A549 (cell line): ENCODE measurements at regions of chr7 and their contacts with region 1.

Region 1: DNA sequence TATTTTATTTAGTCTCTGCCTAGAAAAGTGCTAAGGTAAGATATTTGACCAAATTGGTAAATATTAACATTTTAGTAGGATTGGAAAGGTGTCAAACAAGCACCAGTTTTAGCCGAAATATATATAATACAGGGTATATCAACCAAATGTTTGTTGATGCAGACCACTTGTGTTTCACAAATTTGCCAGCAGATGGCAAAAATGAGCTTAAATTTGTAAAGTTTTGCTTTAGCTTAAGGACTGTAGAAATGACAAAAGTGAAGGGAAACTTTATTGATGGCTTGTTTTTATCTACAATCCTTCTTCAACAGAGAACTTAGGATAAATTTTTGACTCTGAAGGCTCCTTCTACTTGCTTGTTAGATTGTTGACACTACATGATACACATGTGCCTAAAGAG is 4.8 kb upstream of the POLR1F start:
- DNase-seq: peak in 1 of 2 experiments; percentile 54
- ATAC-seq: peak in 1 of 2 experiments; percentile 50; a peak in 2 of 6 replicates
- H3K4me3 ChIP-seq: no peak overlapping the region
- H3K27ac ChIP-seq: no peak overlapping the region
- H3K4me1 ChIP-seq: 0 out of 3 replicates have a peak, but pooled peaks cover 5% of the 10 kb centered on the region
- CTCF ChIP-seq: peak; percentile 79
- EP300 ChIP-seq: no peak
- POLR2A ChIP-seq: no peak
- RAD21 ChIP-seq: peak; percentile 69 to 81

Region 2: DNA sequence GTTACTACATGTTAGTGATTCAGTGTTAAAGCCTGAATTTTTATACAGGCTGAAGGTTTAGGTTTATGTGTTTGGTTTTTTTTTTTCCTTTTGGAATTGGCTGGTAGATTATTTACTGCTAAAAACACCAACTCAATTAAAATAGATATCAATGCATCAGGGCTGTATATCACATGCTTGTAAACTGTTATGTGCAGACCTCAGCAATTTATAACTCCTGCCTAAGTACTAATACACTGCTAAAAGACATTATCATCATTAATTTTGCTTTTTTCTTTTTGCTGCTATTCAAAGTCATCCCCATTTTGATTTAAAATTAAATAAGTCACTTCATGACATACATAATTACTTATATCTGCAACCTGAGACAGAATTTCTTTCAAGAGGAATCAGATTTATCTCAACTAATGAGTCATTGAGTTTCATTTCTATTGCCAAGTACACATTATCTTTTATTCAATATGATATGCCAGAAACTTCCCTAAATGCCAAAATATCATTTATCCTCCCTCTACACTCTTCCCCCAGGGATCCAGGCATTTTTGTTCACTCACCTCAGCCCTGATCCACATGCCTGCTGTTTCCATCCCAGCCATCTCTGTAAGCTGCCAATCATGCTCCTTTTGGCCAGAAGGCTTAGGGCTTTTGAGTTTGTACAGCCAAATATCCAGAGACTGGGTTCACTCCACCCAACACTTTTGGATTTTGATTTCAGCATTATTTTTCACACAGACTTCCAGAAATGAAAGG is 103.3 kb before region 1 on chr7:
- CTCF ChIA-PET with region 1: no interaction called
- POLR2A ChIA-PET with region 1: no interaction called
- DNase-seq: no peak
- ATAC-seq: no peak
- H3K4me3 ChIP-seq: no peak overlapping the region
- H3K27ac ChIP-seq: no peak overlapping the region
- H3K4me1 ChIP-seq: no peaks in the 10 kb centered on the region
- CTCF ChIP-seq: no peak
- EP300 ChIP-seq: no peak
- POLR2A ChIP-seq: no peak
- RAD21 ChIP-seq: no peak

Region 3: GRCh38 chr7:19728716-19729115 is 15.0 kb after region 1 on chr7:
- CTCF ChIA-PET with region 1: interaction called, 12 read pairs
- POLR2A ChIA-PET with region 1: interaction called, 3 read pairs
- DNase-seq: no peak
- ATAC-seq: no peak
- H3K4me3 ChIP-seq: no peak overlapping the region
- H3K27ac ChIP-seq: no peak overlapping the region
- H3K4me1 ChIP-seq: no peaks in the 10 kb centered on the region
- CTCF ChIP-seq: no peak
- EP300 ChIP-seq: no peak
- POLR2A ChIP-seq: no peak
- RAD21 ChIP-seq: no peak

Region 4: DNA sequence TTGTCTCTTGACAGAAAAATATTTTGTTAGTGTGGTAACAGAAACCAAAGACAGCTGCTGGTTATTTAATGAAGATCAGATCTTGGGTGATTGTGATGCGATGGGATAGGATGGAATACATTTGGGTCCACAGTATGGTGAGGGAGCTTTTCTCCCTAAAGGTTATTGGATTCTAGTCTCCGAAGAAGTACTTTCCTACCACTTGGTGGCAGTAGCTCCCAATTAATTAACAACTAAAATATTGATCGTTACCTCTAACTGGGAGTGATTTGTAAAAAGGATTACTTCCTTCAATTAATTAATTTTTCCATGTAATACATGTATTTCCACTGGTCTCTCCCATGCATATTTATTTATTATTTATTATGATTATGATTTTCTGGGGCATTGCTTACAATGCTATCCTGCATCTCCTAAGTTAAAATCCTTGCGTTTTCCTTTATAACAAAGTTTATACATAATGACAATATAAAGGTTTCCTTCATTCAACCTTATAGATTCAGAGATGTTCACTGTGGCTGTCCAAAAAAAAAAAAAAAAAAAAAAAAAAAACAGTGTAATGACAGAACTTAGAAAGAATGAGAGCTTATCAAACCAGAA is 34.2 kb after region 1 on chr7:
- CTCF ChIA-PET with region 1: interaction called, 14 read pairs
- POLR2A ChIA-PET with region 1: no interaction called
- DNase-seq: peak; percentile 33 to 53
- ATAC-seq: peak; percentile 59 to 82; a peak in 5 of 6 replicates
- H3K4me3 ChIP-seq: no peak overlapping the region
- H3K27ac ChIP-seq: no peak overlapping the region
- H3K4me1 ChIP-seq: no peaks in the 10 kb centered on the region
- CTCF ChIP-seq: peak; percentile 85
- EP300 ChIP-seq: no peak
- POLR2A ChIP-seq: no peak
- RAD21 ChIP-seq: peak; percentile 87 to 94

Region 5: GRCh38 chr7:20172736-20173334 is 459.2 kb after region 1 on chr7:
- CTCF ChIA-PET with region 1: interaction called, 28 read pairs
- POLR2A ChIA-PET with region 1: no interaction called
- DNase-seq: peak; percentile 61 to 76
- ATAC-seq: peak; percentile 93 to 99
- H3K4me3 ChIP-seq: no peak overlapping the region
- H3K27ac ChIP-seq: peak overlapping the region in 1 of 2 experiments; percentile 57; a peak in 1 of 6 replicates
- H3K4me1 ChIP-seq: no peaks in the 10 kb centered on the region
- CTCF ChIP-seq: peak; percentile 81
- EP300 ChIP-seq: no peak
- POLR2A ChIP-seq: no peak
- RAD21 ChIP-seq: peak; percentile 94 to 96

Region 6: GRCh38 chr7:20310963-20311742 is 597.5 kb after region 1 on chr7:
- CTCF ChIA-PET with region 1: interaction called, 28 read pairs
- POLR2A ChIA-PET with region 1: no interaction called
- DNase-seq: peak in 1 of 2 experiments; percentile 52
- ATAC-seq: peak in 1 of 2 experiments; percentile 47; a peak in 1 of 6 replicates
- H3K4me3 ChIP-seq: no peak overlapping the region
- H3K27ac ChIP-seq: no peak overlapping the region
- H3K4me1 ChIP-seq: peaks cover 8% of the 10 kb centered on the region; the same call in 1 of the 3 replicates
- CTCF ChIP-seq: peak; percentile 62
- EP300 ChIP-seq: no peak
- POLR2A ChIP-seq: no peak
- RAD21 ChIP-seq: peak; percentile 78 to 84